Activated T-helper 2 cell treated with anti-CD3 and anti-CD28 coated beads, Interferon-gamma antibody, Interleukin-2, Interleukin-4, amounts not matched to agents 10 μg/mL and 5 μg/mL and 100 μg/mL, durations not matched to agents 14 hours and 24 hours and 36 hours (primary cell): ENCODE measurements at regions of chr6 and their contacts with region 1.

Region 1: GRCh38 chr6:87832025-87832825 is 130.2 kb upstream of the AKIRIN2 start:
- DNase-seq: no peak
- H3K4me3 Mint-ChIP-seq: peak overlapping the region; percentile 59
- H3K27ac Mint-ChIP-seq: no peak overlapping the region
- H3K4me1 Mint-ChIP-seq: peaks cover 10% of the 10 kb centered on the region
- H3K27me3 Mint-ChIP-seq: peaks cover 7% of the 10 kb centered on the region

Region 2: DNA sequence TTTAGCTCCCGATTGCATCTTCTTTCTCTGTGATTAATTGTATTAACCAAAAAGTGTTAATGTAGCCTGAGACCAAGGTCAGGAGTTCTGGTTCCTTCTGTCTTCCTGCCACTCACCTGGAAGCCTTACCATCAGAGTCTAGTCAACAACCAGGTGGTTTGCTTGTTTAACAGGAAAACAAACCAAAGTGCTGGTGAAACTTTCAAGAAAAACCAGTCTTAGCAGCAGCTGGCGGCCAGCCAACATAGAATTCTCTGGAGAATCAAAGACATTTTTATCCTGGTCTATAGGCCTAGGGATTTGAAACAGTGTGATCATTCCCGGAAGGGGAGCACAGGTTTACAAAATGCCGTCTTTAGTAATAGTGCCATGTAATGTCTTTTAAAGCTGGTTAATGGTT is 16.3 kb after region 1 on chr6:
- intact Hi-C with region 1: no loop called
- DNase-seq: no peak
- H3K4me3 Mint-ChIP-seq: no peak overlapping the region
- H3K27ac Mint-ChIP-seq: no peak overlapping the region
- H3K4me1 Mint-ChIP-seq: peaks cover 8% of the 10 kb centered on the region
- H3K27me3 Mint-ChIP-seq: peaks cover 30% of the 10 kb centered on the region

Region 3: DNA sequence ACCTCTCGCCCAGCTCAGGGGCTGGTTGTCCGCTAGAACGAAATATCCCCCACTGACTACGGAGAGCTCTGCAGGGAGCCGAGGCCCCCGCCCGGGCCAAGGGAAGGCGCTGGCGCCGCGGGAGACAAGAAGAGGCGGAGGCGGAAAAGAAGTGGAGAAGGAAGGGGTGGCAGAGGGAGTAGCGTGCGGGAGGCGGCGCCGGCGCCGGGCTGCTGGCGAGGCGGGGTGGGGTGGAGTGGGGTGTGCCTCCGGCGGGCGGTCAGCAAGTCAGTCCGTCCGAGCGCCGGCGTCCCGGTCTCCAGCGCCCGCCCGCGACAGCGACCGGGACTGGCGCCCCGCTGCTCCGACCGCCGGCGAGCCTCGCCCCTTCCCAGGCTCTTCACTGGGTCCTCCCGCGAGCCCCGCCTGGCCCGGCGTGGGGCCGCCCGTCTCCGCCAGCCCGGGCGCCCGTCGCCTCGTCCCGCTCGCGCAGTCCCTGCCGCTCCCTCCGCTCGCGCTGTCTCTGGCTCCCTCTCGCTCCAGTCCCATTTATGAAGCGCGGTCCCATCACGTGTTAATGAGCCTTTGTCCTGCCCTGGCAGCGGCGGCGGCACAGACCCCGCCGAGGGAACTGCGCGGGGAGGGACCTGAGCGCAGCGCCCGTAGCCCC is 333.7 kb after region 1 on chr6 and contains the start of gene CNR1:
- intact Hi-C with region 1: loop called (anchors 10 kb)
- DNase-seq: no peak
- H3K4me3 Mint-ChIP-seq: peak within 1 kb of the TSS; percentile 76
- H3K27ac Mint-ChIP-seq: no peak within 1 kb of the TSS
- H3K4me1 Mint-ChIP-seq: peaks cover 8% of the 10 kb centered on the region
- H3K27me3 Mint-ChIP-seq: peaks cover 72% of the 10 kb centered on the region
- total RNA-seq, gene CNR1: not detected in 2 replicates

Region 4: DNA sequence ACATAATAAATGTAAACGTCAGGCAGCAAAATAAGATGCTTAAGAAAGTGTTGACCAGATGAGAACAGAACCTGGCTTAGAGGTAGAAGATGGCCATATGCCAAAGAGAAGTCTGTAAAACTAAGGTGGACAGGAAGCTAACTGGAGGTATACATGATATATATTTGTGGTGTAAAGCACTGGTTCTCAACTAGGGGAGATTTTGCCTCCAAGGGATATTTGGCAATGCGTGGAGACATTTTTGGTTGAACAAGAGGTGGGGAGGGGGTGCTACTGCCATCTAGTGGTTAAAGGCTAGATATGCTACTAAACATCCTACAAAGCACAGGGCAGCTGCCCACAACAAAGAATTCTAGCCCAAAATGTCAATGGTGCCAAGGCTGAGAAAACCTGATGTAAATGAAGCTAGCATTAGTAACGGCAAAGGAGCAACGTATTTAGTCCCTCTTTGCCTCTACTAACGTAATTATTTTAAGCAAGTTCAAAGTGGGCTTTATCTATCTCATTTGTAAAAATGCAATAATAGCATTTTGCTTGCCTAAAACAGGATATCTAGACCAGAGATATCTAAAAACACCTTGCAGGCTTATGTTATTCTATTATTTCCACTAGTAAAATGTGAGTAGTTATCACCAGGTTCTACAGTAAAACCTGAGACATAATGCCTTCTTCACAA is 948.6 kb after region 1 on chr6:
- intact Hi-C with region 1: loop called (anchors 5 kb)
- DNase-seq: peak; percentile 20
- H3K4me3 Mint-ChIP-seq: no peak overlapping the region
- H3K27ac Mint-ChIP-seq: no peak overlapping the region
- H3K4me1 Mint-ChIP-seq: peaks cover 1% of the 10 kb centered on the region
- H3K27me3 Mint-ChIP-seq: no peaks in the 10 kb centered on the region